ENCODE measurements at regions of chrX and their contacts with region 1.

Region 1: GRCh38 chrX:15493118-15493962 is at the start of gene PIR:
- DNase-seq: peak; percentile 80
- ATAC-seq: peak; percentile 99
- H3K4me3 ChIP-seq: peak within 1 kb of the TSS; percentile 43 to 73 (median 68); a peak in 5 of 6 replicates
- H3K27ac ChIP-seq: peak within 1 kb of the TSS; percentile 87
- H3K4me1 ChIP-seq: peaks cover 25% of the 10 kb centered on the region
- H3K27me3 ChIP-seq: no peaks in the 10 kb centered on the region
- CTCF ChIP-seq: peak; percentile 68
- EP300 ChIP-seq: peak in 1 of 2 experiments; percentile 43; a peak in 1 of 4 replicates
- POLR2A ChIP-seq: peak; percentile 51 to 65
- RAD21 ChIP-seq: no peak
- total RNA-seq, gene PIR: 38.0 and 53.3 TPM in 2 replicates

Region 2: GRCh38 chrX:15343075-15343476 is 150.3 kb before region 1 on chrX:
- CTCF ChIA-PET with region 1: no interaction called
- POLR2A ChIA-PET with region 1: no interaction called
- in situ Hi-C with region 1: no loop called
- intact Hi-C with region 1: no loop called
- DNase-seq: no peak
- ATAC-seq: no peak
- H3K4me3 ChIP-seq: no peak overlapping the region
- H3K27ac ChIP-seq: no peak overlapping the region
- H3K4me1 ChIP-seq: no peaks in the 10 kb centered on the region
- H3K27me3 ChIP-seq: no peaks in the 10 kb centered on the region
- CTCF ChIP-seq: no peak
- EP300 ChIP-seq: no peak
- POLR2A ChIP-seq: no peak
- RAD21 ChIP-seq: no peak

Region 3: DNA sequence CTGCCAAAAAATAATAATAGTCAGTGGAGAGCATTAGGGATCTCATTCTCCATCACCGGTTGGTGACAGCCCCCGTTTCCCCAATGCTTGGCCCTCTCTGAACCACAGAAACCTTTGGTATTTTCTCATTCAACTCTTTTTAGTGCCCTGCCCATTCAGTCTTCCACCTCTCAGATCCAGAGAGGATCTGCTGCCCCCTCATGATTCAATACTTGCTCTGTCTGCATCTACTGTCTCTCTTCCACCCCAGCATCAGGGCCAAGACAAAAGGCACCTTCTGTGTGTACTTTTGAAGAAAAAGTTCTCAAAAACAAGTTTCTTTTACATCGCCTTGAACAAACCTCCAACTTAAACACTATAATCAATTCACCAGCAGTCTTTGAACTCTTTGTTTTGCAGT is 151.9 kb after region 1 on chrX:
- CTCF ChIA-PET with region 1: no interaction called
- POLR2A ChIA-PET with region 1: no interaction called
- in situ Hi-C with region 1: no loop called
- intact Hi-C with region 1: loop called (anchors 10 kb)
- DNase-seq: no peak
- ATAC-seq: no peak
- H3K4me3 ChIP-seq: no peak overlapping the region
- H3K27ac ChIP-seq: no peak overlapping the region
- H3K4me1 ChIP-seq: no peaks in the 10 kb centered on the region
- H3K27me3 ChIP-seq: no peaks in the 10 kb centered on the region
- CTCF ChIP-seq: peak; percentile 21; the same call in 1 of the 2 replicates
- EP300 ChIP-seq: no peak
- POLR2A ChIP-seq: no peak
- RAD21 ChIP-seq: no peak

Region 4: GRCh38 chrX:15789979-15790768 is 296.8 kb after region 1 on chrX and contains the start of gene ZRSR2:
- CTCF ChIA-PET with region 1: no interaction called
- POLR2A ChIA-PET with region 1: no interaction called
- in situ Hi-C with region 1: no loop called
- intact Hi-C with region 1: no loop called
- DNase-seq: peak; percentile 49
- ATAC-seq: peak; percentile 96
- H3K4me3 ChIP-seq: peak within 1 kb of the TSS; percentile 74 to 93 (median 83)
- H3K27ac ChIP-seq: peak within 1 kb of the TSS; percentile 63
- H3K4me1 ChIP-seq: peaks cover 3% of the 10 kb centered on the region
- H3K27me3 ChIP-seq: no peaks in the 10 kb centered on the region; a peak in 1 of 5 replicates
- CTCF ChIP-seq: no peak
- EP300 ChIP-seq: no peak
- POLR2A ChIP-seq: peak in 1 of 2 experiments; percentile 78; a peak in 3 of 4 replicates
- RAD21 ChIP-seq: no peak
- total RNA-seq, gene ZRSR2: 3.6 and 4.9 TPM in 2 replicates